ENCODE measurements at regions of chr6 and their contacts with region 1.

Region 1: DNA sequence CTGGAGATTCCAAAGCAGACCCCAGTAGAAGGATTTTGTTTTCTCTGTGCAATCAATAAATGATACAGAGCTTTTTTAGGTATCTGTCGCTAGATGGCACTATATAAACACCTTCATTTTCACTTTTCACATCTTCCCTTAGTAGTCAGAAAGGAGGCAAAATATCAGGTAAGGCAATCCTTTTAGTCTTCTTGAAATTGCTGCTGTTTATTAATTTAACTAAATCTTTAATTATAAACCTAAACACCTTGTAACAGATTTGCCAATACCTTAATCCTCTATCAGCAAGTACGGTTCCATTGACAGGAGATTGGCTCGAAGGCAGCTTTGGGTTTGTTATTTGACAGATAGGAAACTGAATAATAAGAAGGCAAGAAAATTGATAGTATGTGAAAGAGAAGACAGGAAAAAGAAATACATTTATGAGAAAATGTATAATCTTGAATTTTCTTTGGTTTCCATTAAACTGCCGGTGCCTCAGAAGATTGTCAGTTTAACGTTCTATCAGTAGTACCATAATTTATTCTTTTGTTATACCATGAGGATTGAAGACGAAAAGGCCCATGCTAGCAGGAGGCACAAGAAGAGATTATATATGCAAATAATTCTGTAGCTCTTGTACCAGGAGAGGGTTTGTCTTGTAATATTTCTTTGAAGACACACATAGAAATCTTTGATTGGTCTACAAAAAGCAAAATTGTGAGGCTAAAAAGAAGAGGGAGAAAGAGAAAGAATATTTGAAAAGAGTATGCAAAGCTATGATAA is 23.5 kb upstream of the IBTK start:
- DNase-seq: peak; percentile 15
- ATAC-seq: peak; percentile 79
- H3K4me3 ChIP-seq: no peak overlapping the region
- H3K27ac ChIP-seq: no peak overlapping the region
- H3K4me1 ChIP-seq: no peaks in the 10 kb centered on the region
- H3K27me3 ChIP-seq: no peaks in the 10 kb centered on the region
- CTCF ChIP-seq: peak; percentile 45 to 65 (median 50)
- EP300 ChIP-seq: no peak
- POLR2A ChIP-seq: no peak
- RAD21 ChIP-seq: peak; percentile 84

Region 2: GRCh38 chr6:82017288-82017687 is 253.8 kb before region 1 on chr6:
- CTCF ChIA-PET with region 1: no interaction called
- POLR2A ChIA-PET with region 1: no interaction called
- RAD21 ChIA-PET with region 1: no interaction called
- SMC1A ChIA-PET with region 1: no interaction called
- in situ Hi-C with region 1: no loop called
- intact Hi-C with region 1: no loop called
- DNase-seq: no peak
- ATAC-seq: no peak
- H3K4me3 ChIP-seq: no peak overlapping the region
- H3K27ac ChIP-seq: no peak overlapping the region
- H3K4me1 ChIP-seq: no peaks in the 10 kb centered on the region
- H3K27me3 ChIP-seq: no peaks in the 10 kb centered on the region; a peak in 1 of 4 replicates
- CTCF ChIP-seq: no peak
- EP300 ChIP-seq: no peak
- POLR2A ChIP-seq: no peak
- RAD21 ChIP-seq: no peak

Region 3: DNA sequence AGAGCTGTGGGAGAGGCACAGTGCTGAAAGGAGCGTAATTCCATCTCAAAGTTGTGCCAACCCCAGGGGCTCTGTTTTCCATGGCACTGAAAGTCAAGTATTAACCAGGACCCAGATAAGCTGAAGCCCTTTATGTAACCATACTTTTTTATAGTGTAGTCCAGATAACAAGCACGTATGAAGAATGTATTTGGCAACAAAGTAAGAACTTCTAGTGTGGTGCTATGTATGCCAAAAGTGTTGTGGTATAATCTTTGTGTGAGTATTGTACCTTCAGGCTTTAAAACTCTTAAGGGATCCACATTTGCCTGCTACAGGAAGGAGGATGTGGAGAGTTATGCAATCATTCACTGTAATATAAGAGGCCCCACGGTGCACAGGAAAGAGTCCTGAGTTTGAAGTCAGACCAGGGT is 152.9 kb before region 1 on chr6:
- CTCF ChIA-PET with region 1: no interaction called
- POLR2A ChIA-PET with region 1: no interaction called
- RAD21 ChIA-PET with region 1: no interaction called
- SMC1A ChIA-PET with region 1: no interaction called
- in situ Hi-C with region 1: no loop called
- intact Hi-C with region 1: no loop called
- DNase-seq: no peak
- ATAC-seq: no peak
- H3K4me3 ChIP-seq: no peak overlapping the region
- H3K27ac ChIP-seq: no peak overlapping the region
- H3K4me1 ChIP-seq: no peaks in the 10 kb centered on the region
- H3K27me3 ChIP-seq: no peaks in the 10 kb centered on the region
- CTCF ChIP-seq: no peak
- EP300 ChIP-seq: no peak
- POLR2A ChIP-seq: no peak
- RAD21 ChIP-seq: no peak

Region 4: GRCh38 chr6:82237013-82237412 is 34.0 kb before region 1 on chr6:
- CTCF ChIA-PET with region 1: no interaction called
- POLR2A ChIA-PET with region 1: no interaction called
- RAD21 ChIA-PET with region 1: no interaction called
- SMC1A ChIA-PET with region 1: no interaction called
- in situ Hi-C with region 1: no loop called
- intact Hi-C with region 1: no loop called
- DNase-seq: no peak
- ATAC-seq: peak; percentile 38
- H3K4me3 ChIP-seq: no peak overlapping the region
- H3K27ac ChIP-seq: no peak overlapping the region
- H3K4me1 ChIP-seq: no peaks in the 10 kb centered on the region
- H3K27me3 ChIP-seq: no peaks in the 10 kb centered on the region
- CTCF ChIP-seq: no peak
- EP300 ChIP-seq: no peak
- POLR2A ChIP-seq: no peak
- RAD21 ChIP-seq: no peak

Region 5: GRCh38 chr6:82363351-82364086 is 92.5 kb after region 1 on chr6 and contains the start of gene TPBG:
- CTCF ChIA-PET with region 1: interaction called, 3 read pairs
- POLR2A ChIA-PET with region 1: no interaction called
- RAD21 ChIA-PET with region 1: no interaction called
- SMC1A ChIA-PET with region 1: interaction called, 3 read pairs
- in situ Hi-C with region 1: no loop called
- intact Hi-C with region 1: loop called (anchors 10 kb)
- DNase-seq: no peak
- ATAC-seq: peak; percentile 66
- H3K4me3 ChIP-seq: peak within 1 kb of the TSS; percentile 77
- H3K27ac ChIP-seq: no peak within 1 kb of the TSS; the same call in 1 of the 2 replicates
- H3K4me1 ChIP-seq: no peaks in the 10 kb centered on the region
- H3K27me3 ChIP-seq: peaks cover 3 to 5% of the 10 kb centered on the region in 2 experiments; a peak in 2 of 4 replicates
- CTCF ChIP-seq: peak in 2 of 3 experiments; percentile 15 to 38; a peak in 2 of 6 replicates
- EP300 ChIP-seq: no peak
- POLR2A ChIP-seq: peak; percentile 46
- RAD21 ChIP-seq: 0 out of 2 replicates have a peak, but pooled peaks have one; percentile 10
- polyA plus RNA-seq, gene TPBG: 0.06 to 0.33 TPM

Region 6: DNA sequence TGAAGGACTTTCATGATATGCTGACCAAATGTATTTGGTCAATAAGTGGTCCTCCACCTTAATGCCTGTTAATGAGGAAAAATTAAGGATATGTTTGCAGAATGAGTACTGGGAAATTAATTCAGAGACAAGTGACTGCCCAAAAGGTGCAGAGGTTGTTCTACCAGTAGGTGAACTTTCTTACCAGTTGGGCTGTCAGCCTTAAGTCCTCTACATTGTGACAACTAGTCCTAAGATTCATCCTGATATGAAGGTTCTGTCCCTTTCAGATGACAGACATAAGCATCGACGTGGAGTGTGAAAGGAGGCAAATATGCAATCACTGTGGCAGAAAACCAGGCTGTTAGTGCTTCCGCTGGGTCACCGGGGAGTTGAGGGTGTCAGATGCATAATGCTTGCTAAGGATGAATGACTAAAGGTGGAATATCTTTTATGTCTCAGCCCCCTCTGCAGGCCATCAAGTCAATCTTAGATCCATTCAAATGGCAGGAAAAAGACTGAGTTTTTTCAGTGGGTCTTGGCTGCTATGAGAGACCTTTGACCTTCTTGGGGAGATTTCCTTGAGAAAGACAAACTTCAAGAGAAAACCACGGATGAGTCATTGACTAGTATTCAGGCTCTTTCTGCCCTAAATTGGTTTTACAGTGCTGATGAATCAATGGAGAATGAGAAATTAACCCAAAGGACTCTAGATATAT is 318.6 kb after region 1 on chr6:
- CTCF ChIA-PET with region 1: interaction called, 11 read pairs
- POLR2A ChIA-PET with region 1: interaction called, 3 read pairs
- RAD21 ChIA-PET with region 1: interaction called, 5 read pairs
- SMC1A ChIA-PET with region 1: interaction called, 6 read pairs
- in situ Hi-C with region 1: loop called (anchors 5 kb)
- intact Hi-C with region 1: loop called (anchors 1 kb)
- DNase-seq: peak; percentile 60
- ATAC-seq: peak; percentile 96
- H3K4me3 ChIP-seq: no peak overlapping the region
- H3K27ac ChIP-seq: no peak overlapping the region
- H3K4me1 ChIP-seq: no peaks in the 10 kb centered on the region
- H3K27me3 ChIP-seq: no peaks in the 10 kb centered on the region
- CTCF ChIP-seq: peak; percentile 28 to 63 (median 33); a peak in 4 of 6 replicates
- EP300 ChIP-seq: no peak
- POLR2A ChIP-seq: no peak
- RAD21 ChIP-seq: peak; percentile 62

Region 7: GRCh38 chr6:82712852-82713251 is 441.8 kb after region 1 on chr6:
- CTCF ChIA-PET with region 1: interaction called, 22 read pairs
- POLR2A ChIA-PET with region 1: no interaction called
- RAD21 ChIA-PET with region 1: interaction called, 10 read pairs
- SMC1A ChIA-PET with region 1: interaction called, 9 read pairs
- in situ Hi-C with region 1: loop called (anchors 5 kb)
- intact Hi-C with region 1: loop called (anchors 2 kb)
- DNase-seq: no peak
- ATAC-seq: peak; percentile 61; the same call in 2 of the 3 replicates
- H3K4me3 ChIP-seq: no peak overlapping the region
- H3K27ac ChIP-seq: no peak overlapping the region
- H3K4me1 ChIP-seq: no peaks in the 10 kb centered on the region
- H3K27me3 ChIP-seq: no peaks in the 10 kb centered on the region
- CTCF ChIP-seq: peak in 2 of 3 experiments; percentile 26 to 42; a peak in 3 of 6 replicates
- EP300 ChIP-seq: no peak
- POLR2A ChIP-seq: no peak
- RAD21 ChIP-seq: peak; percentile 42